Mucosa of descending colon (tissue), 3 donors: ENCODE measurements at regions of chr2 and their contacts with region 1.

Region 1: DNA sequence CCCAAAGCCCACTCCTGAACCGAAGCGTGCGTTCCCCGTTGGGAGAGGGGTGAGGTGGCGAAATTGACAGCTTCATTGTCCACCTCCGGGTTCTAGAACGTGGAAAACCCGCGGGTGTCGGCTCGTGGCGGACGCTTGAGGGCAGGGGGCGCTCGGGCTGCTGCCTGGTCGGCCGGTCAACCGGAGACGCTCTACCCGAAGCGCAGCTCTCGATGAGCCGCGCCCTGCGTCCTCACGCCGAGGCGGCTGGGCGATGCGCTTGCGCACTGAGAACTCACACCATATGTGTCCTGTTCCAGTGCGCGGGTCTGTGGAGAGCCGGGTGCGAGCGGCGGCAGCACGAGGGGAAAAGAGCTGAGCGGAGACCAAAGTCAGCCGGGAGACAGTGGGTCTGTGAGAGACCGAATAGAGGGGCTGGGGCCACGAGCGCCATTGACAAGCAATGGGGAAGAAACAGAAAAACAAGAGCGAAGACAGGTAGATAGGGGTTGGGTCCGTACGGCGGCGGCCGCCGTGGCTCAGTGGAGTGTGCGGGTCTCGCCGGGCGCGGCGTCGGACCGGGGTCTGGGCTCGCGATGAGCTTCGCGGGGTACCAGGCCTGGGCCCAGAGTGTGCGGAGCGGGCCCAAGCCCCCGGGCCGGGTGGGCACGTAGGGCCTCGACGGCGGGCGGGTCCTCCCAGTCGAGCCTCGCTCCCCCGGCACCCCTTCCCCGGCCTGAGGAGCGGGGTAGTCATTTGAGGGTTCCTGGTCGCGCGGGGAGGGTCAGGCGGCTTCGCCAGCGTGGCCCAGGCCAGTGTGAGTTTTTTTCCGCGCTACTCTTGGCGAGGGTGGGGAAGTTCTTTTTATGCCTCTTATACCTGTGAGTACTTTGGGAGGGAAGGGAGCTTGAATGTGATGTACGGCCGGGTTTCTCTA is at the start of gene EIF5B:
- DNase-seq: peak; percentile 97 to 98 (median 97)
- ATAC-seq: peak; percentile 89
- H3K4me3 ChIP-seq: peak within 1 kb of the TSS; percentile 95
- H3K4me1 ChIP-seq: peaks cover 13% of the 10 kb centered on the region
- CTCF ChIP-seq: peak; percentile 38
- total RNA-seq, gene EIF5B: 23.5 to 47.3 (median 30.1) TPM

Region 2: GRCh38 chr2:99425022-99425421 is 87.7 kb after region 1 on chr2:
- intact Hi-C with region 1: no loop called
- DNase-seq: no peak
- ATAC-seq: no peak
- H3K4me3 ChIP-seq: no peak overlapping the region
- H3K4me1 ChIP-seq: no peaks in the 10 kb centered on the region
- CTCF ChIP-seq: no peak

Region 3: DNA sequence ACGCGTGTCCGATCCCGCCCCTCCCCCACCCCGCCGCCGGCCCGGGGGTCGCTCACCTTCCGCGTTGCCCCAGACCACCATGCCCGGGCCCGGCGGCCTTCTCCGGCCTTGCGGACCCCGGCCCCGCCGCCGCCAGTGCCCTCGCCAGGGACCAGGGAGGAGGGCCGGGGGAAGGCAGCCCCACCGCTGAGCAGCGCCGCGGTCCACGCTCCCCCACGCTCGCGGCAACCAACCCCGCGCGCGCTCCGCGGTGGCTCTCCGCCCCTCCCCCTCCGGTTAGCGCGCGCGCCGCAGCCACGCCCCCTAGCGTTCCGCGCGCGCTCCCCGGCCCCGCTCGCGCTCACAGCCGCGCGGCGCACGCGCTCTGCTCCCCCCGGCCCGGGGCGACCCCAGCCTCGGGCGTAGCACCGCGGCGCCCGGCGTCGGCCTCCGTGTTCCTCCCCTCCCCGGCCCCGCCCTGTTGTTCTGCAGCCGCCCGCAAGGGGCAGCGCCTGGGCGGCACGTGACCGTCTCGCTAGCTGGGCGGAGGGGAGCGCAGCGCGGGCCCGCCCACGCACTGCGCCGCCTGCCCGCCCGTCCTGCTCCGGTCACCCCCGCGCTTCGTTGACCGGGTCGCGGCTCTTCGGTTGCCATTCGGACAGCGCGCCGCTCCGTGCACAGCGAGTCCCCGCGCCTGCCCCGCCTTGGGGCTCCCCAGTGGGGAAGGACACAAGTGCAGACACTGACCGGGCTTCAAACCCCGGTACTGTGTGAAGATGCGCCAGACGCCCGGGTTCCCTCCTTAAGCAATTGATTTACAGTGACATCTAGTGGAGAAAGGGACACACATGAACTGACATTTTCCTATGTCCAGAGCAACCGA is 152.6 kb after region 1 on chr2 and contains the start of gene REV1:
- intact Hi-C with region 1: loop called in 1 of 2 experiments (anchors 10 kb)
- DNase-seq: peak; percentile 87 to 97 (median 96)
- ATAC-seq: peak; percentile 92
- H3K4me3 ChIP-seq: peak within 1 kb of the TSS; percentile 88
- H3K4me1 ChIP-seq: peaks cover 6% of the 10 kb centered on the region
- CTCF ChIP-seq: peak; percentile 70
- total RNA-seq, gene REV1: 40.2 to 53.4 (median 50.7) TPM

Region 4: DNA sequence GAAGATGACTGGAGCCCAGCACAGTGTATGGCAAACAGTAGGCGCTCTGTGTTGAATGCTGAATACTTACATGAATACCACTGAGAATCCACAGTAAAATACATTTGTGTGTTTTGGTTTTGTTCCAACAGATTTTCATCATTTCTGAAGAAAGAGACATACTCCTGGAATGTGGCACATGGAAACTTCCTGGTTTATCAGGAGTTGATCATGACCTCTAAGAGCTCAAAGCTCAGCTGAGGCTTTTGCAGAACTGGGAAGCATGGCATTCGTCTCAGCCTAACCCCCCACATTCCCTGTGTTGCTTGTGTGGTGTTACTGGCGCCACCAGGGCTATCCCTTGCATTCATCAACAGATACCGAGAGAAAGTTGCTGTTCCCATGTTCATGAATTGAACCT is 469.4 kb after region 1 on chr2:
- intact Hi-C with region 1: no loop called
- DNase-seq: no peak
- ATAC-seq: no peak
- H3K4me3 ChIP-seq: no peak overlapping the region
- H3K4me1 ChIP-seq: no peaks in the 10 kb centered on the region
- CTCF ChIP-seq: no peak